Common myeloid progenitor, CD34-positive (primary cell): ENCODE measurements at regions of chr2 and their contacts with region 1.

Region 1: DNA sequence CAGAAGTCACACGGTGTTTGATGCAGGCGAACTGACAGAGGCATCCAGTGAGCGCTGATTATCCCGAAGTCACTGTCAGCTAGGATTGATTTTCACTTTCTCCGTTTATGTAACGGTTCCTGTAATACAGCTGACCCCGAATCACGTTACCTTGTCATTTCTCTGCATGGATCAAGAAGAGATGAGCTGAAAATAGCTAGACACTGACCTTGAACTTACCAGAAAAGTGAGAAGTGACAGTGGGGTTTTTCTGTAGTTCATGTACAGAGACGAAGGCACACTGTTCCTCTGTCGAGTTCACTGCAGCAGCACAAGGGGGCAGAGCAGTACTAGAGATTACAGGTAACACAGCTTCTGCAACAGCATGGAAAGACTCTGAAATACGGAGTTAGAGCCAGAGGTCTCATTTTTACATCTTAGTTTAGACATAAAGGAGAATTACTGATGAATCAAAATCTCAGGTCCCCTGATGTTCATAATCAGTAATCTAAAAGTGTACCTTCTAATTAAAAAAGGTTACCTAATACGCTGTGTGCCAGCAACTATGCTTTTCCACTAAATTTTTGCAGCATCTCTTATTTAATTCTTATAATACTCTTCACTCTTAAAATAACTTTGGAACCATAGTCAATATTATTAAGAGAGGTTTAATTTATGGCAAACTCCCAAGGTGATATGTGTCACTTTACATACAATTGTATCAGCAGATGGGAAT is 33.1 kb downstream of the ARHGAP15 start:
- DNase-seq: peak; percentile 81 to 90 (median 89)
- H3K4me3 ChIP-seq: peak overlapping the region in 1 of 7 experiments; percentile 5
- H3K27ac ChIP-seq: no peak overlapping the region
- H3K4me1 ChIP-seq: peaks cover 8 to 53% (median 28%) of the 10 kb centered on the region in 4 experiments
- H3K27me3 ChIP-seq: no peaks in the 10 kb centered on the region

Region 2: GRCh38 chr2:143128681-143129580 is 33.3 kb before region 1 on chr2 and contains the start of gene ARHGAP15:
- CTCF ChIA-PET with region 1: interaction called, 32 read pairs
- POLR2A ChIA-PET with region 1: no interaction called
- DNase-seq: peak; percentile 88 to 96 (median 94)
- H3K4me3 ChIP-seq: peak within 1 kb of the TSS in 6 of 7 experiments; percentile 62 to 97 (median 78)
- H3K27ac ChIP-seq: peak within 1 kb of the TSS; percentile 93 to 96
- H3K4me1 ChIP-seq: peaks cover 36 to 72% (median 47%) of the 10 kb centered on the region in 4 experiments
- H3K27me3 ChIP-seq: no peaks in the 10 kb centered on the region

Region 3: DNA sequence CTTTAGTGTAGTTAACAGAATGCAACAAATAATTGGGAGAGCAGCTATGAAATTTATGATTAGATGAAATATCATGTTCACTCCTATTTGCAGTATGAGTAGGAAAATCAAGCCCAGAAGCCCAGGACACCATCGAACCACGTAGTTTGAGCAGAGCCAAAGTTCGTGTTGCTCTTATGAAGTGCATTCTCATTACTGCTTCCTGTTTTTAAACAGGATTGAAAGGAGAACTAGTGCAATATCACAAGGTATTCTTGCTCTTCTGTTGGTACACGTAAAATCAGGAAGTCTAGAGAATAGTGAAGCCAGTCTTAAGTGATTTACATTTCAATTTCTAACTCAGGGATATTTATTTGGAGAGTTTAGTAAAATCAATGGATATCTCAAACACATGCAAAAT is 12.0 kb before region 1 on chr2:
- CTCF ChIA-PET with region 1: interaction called, 16 read pairs
- POLR2A ChIA-PET with region 1: no interaction called
- DNase-seq: peak; percentile 77 to 93 (median 86)
- H3K4me3 ChIP-seq: peak overlapping the region in 3 of 7 experiments; percentile 31 to 43 (median 34)
- H3K27ac ChIP-seq: peak overlapping the region; percentile 46 to 62
- H3K4me1 ChIP-seq: peaks cover 44 to 73% (median 57%) of the 10 kb centered on the region in 4 experiments
- H3K27me3 ChIP-seq: no peaks in the 10 kb centered on the region

Region 4: DNA sequence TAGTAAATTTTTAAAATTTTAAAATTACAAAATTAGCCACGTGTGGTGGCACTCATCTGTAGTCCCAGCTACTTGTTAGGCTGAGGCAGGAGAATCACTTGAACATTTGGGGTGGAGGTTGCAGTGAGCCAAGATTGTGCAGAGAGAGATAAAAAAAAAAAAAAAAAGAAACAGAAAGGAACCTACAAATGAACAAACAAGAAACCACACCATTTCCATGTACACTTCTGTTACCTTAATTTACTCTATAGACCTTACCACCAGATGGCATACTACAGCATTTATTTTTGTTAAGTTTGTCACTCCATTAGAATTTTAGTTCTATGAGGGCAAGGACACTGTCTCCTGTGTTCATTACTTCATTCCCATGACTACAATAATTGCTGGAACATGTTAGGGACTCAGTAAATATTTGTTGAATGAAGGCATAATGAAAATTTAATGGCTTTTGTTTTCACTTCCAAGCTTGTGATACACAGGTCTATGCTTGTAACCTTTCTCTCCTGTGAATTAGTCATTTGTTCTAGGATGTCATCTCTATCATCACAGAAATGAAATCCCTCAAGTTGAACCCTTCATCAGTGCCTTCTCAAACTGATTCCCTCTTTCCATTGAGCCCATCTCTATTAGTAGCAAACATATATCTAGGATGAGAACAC is 43.0 kb after region 1 on chr2:
- CTCF ChIA-PET with region 1: interaction called, 10 read pairs
- POLR2A ChIA-PET with region 1: no interaction called
- DNase-seq: peak; percentile 42 to 69 (median 64)
- H3K4me3 ChIP-seq: no peak overlapping the region
- H3K27ac ChIP-seq: no peak overlapping the region
- H3K4me1 ChIP-seq: peaks cover 0 to 11% (median 0%) of the 10 kb centered on the region in 4 experiments
- H3K27me3 ChIP-seq: no peaks in the 10 kb centered on the region

Region 5: GRCh38 chr2:143225931-143226330 is 63.7 kb after region 1 on chr2:
- CTCF ChIA-PET with region 1: interaction called, 53 read pairs
- POLR2A ChIA-PET with region 1: no interaction called
- DNase-seq: no peak
- H3K4me3 ChIP-seq: no peak overlapping the region
- H3K27ac ChIP-seq: no peak overlapping the region
- H3K4me1 ChIP-seq: no peaks in the 10 kb centered on the region
- H3K27me3 ChIP-seq: no peaks in the 10 kb centered on the region

Region 6: GRCh38 chr2:143294068-143294467 is 131.8 kb after region 1 on chr2:
- CTCF ChIA-PET with region 1: no interaction called
- POLR2A ChIA-PET with region 1: no interaction called
- DNase-seq: no peak
- H3K4me3 ChIP-seq: no peak overlapping the region
- H3K27ac ChIP-seq: no peak overlapping the region
- H3K4me1 ChIP-seq: no peaks in the 10 kb centered on the region
- H3K27me3 ChIP-seq: no peaks in the 10 kb centered on the region

Region 7: DNA sequence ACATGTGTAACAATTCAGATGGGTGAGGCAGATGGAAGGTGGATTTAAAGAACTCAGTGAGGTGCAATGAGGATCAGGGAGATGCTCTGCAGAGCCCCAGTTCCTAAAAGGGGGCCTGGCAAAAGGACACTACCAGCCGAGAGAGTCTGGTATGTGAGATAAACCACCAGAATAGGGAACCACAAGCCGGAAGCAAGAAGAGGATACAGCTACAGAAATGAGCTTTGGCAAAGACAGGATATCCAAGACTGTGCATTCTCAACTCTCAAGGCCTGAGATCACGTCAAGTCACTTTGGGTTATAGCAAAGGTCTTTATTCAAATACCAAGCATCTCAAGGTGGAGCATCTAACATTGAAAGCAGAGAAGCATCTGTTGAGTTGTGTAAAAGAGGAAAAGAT is 260.4 kb after region 1 on chr2:
- CTCF ChIA-PET with region 1: no interaction called
- POLR2A ChIA-PET with region 1: no interaction called
- DNase-seq: peak; percentile 54 to 92 (median 87)
- H3K4me3 ChIP-seq: peak overlapping the region in 1 of 7 experiments; percentile 27
- H3K27ac ChIP-seq: no peak overlapping the region
- H3K4me1 ChIP-seq: peaks cover 0 to 17% (median 6%) of the 10 kb centered on the region in 4 experiments
- H3K27me3 ChIP-seq: no peaks in the 10 kb centered on the region